Right ventricle myocardium inferior (tissue), 1 donor: ENCODE measurements at regions of chr1 and their contacts with region 1.

Region 1: GRCh38 chr1:160284782-160285344 is at the start of gene PEX19:
- DNase-seq: peak; percentile 97
- ATAC-seq: peak; percentile 99
- total RNA-seq, gene PEX19: 102 TPM

Region 2: GRCh38 chr1:160261893-160262794 is 22.7 kb before region 1 on chr1 and contains the start of gene DCAF8:
- intact Hi-C with region 1: loop called (anchors 2 kb)
- DNase-seq: peak; percentile 99
- ATAC-seq: peak; percentile 99
- total RNA-seq, gene DCAF8: 142 TPM

Region 3: DNA sequence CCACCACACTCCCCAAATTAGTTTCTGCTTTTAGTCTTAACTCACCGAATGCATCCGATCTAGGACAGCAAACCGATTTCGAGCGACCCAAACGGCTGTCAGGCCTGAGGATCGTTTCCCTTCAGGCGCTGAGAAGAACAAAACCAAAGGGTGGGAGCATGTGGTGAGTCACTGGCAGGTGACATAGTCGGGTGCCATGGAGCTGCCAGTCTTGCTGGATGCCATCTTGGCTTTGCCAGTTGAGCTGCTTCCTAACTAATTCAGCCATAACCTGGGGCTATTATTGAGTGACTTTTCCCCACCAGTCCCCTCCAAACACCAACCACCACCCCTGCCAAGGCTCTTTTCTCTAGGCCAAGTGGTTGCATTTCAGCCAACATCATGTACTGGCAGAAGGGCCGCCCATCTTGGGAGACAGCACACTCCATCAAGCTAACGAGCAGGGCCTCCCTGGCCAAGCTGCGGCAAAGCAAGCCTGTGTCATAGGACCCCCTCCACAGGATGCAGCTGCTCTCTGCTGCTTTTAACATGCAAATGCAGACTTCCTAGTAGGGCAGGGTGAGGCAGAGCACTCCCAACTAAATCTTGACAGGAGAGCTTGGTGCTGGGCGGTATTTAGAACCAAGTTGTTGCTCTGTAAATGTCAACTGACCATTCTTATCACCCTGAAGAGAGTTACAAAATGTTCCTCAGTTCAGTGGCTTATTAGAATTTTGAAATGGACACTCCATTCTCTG is 22.4 kb after region 1 on chr1:
- intact Hi-C with region 1: no loop called
- DNase-seq: no peak
- ATAC-seq: peak; percentile 68

Region 4: DNA sequence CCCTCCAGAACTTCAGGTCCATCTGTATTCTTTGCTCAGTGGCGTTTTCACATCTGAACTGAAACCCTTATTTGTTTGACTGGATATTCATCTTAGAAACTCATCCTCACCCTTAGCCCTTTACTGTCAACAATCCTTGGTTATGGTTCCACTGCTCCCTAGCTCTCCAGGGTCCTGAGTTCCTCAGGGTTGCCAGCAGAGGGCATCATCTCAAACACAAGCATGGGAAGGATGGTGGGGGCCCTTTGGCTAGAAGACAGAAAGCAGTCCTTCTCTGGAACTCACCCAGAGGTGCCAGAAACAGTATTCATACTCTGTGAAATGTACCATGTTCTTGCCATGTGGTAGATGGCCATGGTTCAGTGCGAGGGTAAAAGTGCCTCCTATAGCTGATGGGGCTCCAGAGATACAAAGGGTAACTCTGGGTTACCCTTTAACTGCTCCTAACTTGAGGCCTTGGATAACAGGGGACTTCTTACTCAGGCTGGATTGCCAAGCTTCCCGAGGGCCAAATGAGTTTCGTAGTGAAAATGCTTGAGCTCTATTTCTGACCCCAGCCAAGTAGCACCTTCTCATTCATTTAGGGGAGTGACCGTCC is 69.6 kb after region 1 on chr1:
- intact Hi-C with region 1: no loop called
- DNase-seq: no peak
- ATAC-seq: no peak